H1 (cell line): ENCODE measurements at regions of chr2 and their contacts with region 1.

Region 1: DNA sequence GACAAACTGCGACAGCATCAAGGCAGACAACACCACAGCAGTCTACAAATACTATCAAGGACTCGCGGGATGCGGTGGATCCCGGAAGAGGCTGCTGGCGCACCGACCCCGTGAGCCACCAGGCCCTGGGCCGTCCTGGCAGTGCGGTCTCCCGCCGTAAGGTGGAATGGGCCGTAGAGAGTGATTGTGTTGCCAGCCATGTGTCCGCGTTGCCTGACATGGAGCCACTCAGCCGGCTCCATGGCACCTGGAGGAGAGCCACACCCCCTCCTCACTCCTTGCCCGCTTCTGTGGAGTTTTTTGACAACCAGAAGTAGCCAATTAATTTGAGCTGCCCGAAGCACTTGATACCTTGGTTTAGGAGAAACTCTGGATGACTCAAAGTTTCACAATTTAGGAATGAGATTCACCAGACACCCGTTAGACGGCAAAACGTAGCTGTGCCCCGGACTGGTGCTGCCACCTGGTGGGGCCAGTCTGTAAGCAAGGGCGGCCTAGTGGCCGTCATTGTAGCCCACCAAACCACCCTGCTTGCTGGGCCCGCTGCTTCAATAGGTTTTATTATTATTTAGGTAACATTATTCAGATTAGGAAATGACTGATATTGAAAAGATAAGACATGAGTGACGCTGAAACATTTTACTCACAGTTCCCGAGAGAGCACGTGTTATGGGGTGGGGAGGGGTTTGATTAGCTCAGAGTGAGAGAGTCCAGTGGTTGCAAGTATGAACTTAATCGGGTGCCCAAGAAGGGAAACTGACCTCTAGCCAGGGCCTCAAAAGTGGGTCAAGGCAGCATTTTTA is 10.2 kb upstream of the IMP4 start:
- DNase-seq: peak; percentile 41 to 90
- H3K4me3 ChIP-seq: peak overlapping the region in 3 of 4 experiments; percentile 1 to 59 (median 16); a peak in 6 of 8 replicates
- H3K27ac ChIP-seq: no peak overlapping the region
- H3K4me1 ChIP-seq: peaks cover 0 to 2% (median under 1%) of the 10 kb centered on the region in 4 experiments; a peak in 5 of 7 replicates
- H3K27me3 ChIP-seq: peaks cover 0 to 2% (median 0%) of the 10 kb centered on the region in 4 experiments; a peak in 1 of 7 replicates
- CTCF ChIP-seq: peak; percentile 89 to 97 (median 95)
- EP300 ChIP-seq: no peak
- POLR2A ChIP-seq: no peak
- RAD21 ChIP-seq: peak; percentile 94 to 95

Region 2: GRCh38 chr2:130181325-130181879 is 151.1 kb before region 1 on chr2 and contains the start of gene SMPD4:
- CTCF ChIA-PET with region 1: interaction called, 28 read pairs
- POLR2A ChIA-PET with region 1: interaction called, 15 read pairs
- DNase-seq: peak; percentile 70 to 99
- H3K4me3 ChIP-seq: peak within 1 kb of the TSS; percentile 88 to 99 (median 98)
- H3K27ac ChIP-seq: peak within 1 kb of the TSS; percentile 96
- H3K4me1 ChIP-seq: peaks cover 0 to 7% (median 3%) of the 10 kb centered on the region in 4 experiments; a peak in 4 of 7 replicates
- H3K27me3 ChIP-seq: no peaks in the 10 kb centered on the region
- CTCF ChIP-seq: no peak
- EP300 ChIP-seq: no peak
- POLR2A ChIP-seq: peak; percentile 67 to 92
- RAD21 ChIP-seq: no peak
- total RNA-seq, gene SMPD4: 96.3 and 102 TPM in 2 replicates

Region 3: GRCh38 chr2:130288461-130289403 is 43.7 kb before region 1 on chr2:
- CTCF ChIA-PET with region 1: interaction called, 65 read pairs
- POLR2A ChIA-PET with region 1: interaction called, 4 read pairs
- DNase-seq: peak; percentile 68 to 86
- H3K4me3 ChIP-seq: peak overlapping the region in 3 of 4 experiments; percentile 7 to 43 (median 37); a peak in 4 of 8 replicates
- H3K27ac ChIP-seq: no peak overlapping the region
- H3K4me1 ChIP-seq: peaks cover 0 to 2% (median 0%) of the 10 kb centered on the region in 4 experiments; a peak in 1 of 7 replicates
- H3K27me3 ChIP-seq: 0 out of 7 replicates have a peak, but pooled peaks cover 0 to 3% (median 0%) of the 10 kb centered on the region in 4 experiments
- CTCF ChIP-seq: peak; percentile 22 to 64 (median 36)
- EP300 ChIP-seq: no peak
- POLR2A ChIP-seq: no peak
- RAD21 ChIP-seq: peak; percentile 50 to 71

Region 4: DNA sequence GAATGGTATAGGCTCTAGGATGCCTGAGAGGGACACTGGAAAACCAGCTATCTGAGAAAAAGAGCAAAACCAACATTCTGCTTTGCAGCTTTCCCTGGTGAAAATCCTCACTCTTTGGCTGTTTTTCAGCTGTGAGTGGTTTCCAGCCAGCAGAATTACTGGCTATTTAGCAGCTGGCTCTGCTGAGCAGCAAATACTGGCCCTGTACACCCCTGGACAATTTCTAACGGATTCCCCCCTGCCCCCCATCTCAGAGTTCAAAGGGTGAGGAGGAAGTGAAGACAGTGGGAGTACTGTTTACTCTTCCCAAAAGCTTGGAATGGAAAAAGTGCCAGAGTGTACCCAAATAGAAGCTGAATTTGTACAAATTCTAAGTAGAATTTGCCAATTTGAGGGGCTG is 15.9 kb before region 1 on chr2:
- CTCF ChIA-PET with region 1: interaction called, 40 read pairs
- POLR2A ChIA-PET with region 1: interaction called, 4 read pairs
- DNase-seq: no peak
- H3K4me3 ChIP-seq: no peak overlapping the region
- H3K27ac ChIP-seq: no peak overlapping the region
- H3K4me1 ChIP-seq: no peaks in the 10 kb centered on the region
- H3K27me3 ChIP-seq: no peaks in the 10 kb centered on the region; a peak in 1 of 7 replicates
- CTCF ChIP-seq: no peak
- EP300 ChIP-seq: no peak
- POLR2A ChIP-seq: no peak
- RAD21 ChIP-seq: no peak

Region 5: GRCh38 chr2:130342533-130343275 is 10.2 kb after region 1 on chr2 and contains the start of gene IMP4:
- CTCF ChIA-PET with region 1: interaction called, 14 read pairs
- POLR2A ChIA-PET with region 1: interaction called, 16 read pairs
- DNase-seq: peak; percentile 89 to 94
- H3K4me3 ChIP-seq: peak within 1 kb of the TSS; percentile 77 to 93 (median 84)
- H3K27ac ChIP-seq: peak within 1 kb of the TSS; percentile 84
- H3K4me1 ChIP-seq: peaks cover 0 to 3% (median under 1%) of the 10 kb centered on the region in 4 experiments; a peak in 3 of 7 replicates
- H3K27me3 ChIP-seq: no peaks in the 10 kb centered on the region
- CTCF ChIP-seq: peak; percentile 13 to 32 (median 29)
- EP300 ChIP-seq: no peak
- POLR2A ChIP-seq: peak; percentile 7 to 61; a peak in 1 of 3 replicates
- RAD21 ChIP-seq: peak; percentile 16 to 37; a peak in 2 of 4 replicates
- total RNA-seq, gene IMP4: 93.7 and 96.8 TPM in 2 replicates

Region 6: GRCh38 chr2:130380096-130380934 is 47.8 kb after region 1 on chr2:
- CTCF ChIA-PET with region 1: no interaction called
- POLR2A ChIA-PET with region 1: no interaction called
- DNase-seq: no peak
- H3K4me3 ChIP-seq: no peak overlapping the region
- H3K27ac ChIP-seq: no peak overlapping the region
- H3K4me1 ChIP-seq: no peaks in the 10 kb centered on the region
- H3K27me3 ChIP-seq: no peaks in the 10 kb centered on the region
- CTCF ChIP-seq: no peak
- EP300 ChIP-seq: no peak
- POLR2A ChIP-seq: no peak
- RAD21 ChIP-seq: no peak

Region 7: DNA sequence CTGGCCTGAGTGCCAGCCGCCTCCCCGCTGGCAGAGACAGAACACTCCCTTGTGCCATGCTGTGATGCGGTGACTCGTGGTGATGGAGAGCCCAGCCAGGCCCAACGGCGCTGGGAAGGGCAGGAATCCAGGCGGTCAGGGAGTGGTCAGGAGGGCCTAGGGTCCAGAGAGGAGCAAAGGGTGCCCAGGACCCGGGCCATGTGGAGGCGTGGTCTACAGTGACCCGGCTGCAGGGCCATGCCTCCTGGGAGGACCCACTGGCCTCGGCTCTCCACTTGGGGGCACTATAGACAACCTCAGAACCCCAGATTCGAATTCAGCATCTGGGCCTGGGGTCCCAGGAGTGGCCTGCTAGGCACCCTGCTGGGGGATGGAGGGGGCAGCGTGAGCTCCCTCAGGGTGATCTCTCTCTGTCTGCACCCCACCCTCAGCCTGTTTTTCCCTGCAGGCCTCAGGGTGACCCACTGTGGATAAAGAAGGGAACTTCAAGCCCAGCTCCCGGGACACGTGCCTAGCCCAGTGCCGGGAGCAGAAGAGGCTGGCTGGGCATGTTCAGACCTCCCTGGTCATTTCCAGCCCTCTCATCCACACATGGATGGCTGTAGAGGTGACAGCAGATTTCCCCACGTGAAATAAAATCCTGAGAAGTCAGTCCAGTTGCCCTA is 435.9 kb after region 1 on chr2:
- CTCF ChIA-PET with region 1: no interaction called
- POLR2A ChIA-PET with region 1: no interaction called
- DNase-seq: no peak
- H3K4me3 ChIP-seq: no peak overlapping the region
- H3K27ac ChIP-seq: no peak overlapping the region
- H3K4me1 ChIP-seq: no peaks in the 10 kb centered on the region
- H3K27me3 ChIP-seq: no peaks in the 10 kb centered on the region
- CTCF ChIP-seq: peak; percentile 46 to 56 (median 50)
- EP300 ChIP-seq: no peak
- POLR2A ChIP-seq: no peak
- RAD21 ChIP-seq: peak; percentile 34 to 45